Mammary epithelial cell (primary cell): ENCODE measurements at regions of chr2 and their contacts with region 1.

Region 1: GRCh38 chr2:152541712-152542111 is 175.5 kb downstream of the PRPF40A start:
- DNase-seq: no peak
- H3K4me3 ChIP-seq: no peak overlapping the region
- H3K27ac ChIP-seq: peak overlapping the region; percentile 84
- H3K4me1 ChIP-seq: peaks cover 27% of the 10 kb centered on the region
- H3K27me3 ChIP-seq: no peaks in the 10 kb centered on the region
- CTCF ChIP-seq: no peak

Region 2: DNA sequence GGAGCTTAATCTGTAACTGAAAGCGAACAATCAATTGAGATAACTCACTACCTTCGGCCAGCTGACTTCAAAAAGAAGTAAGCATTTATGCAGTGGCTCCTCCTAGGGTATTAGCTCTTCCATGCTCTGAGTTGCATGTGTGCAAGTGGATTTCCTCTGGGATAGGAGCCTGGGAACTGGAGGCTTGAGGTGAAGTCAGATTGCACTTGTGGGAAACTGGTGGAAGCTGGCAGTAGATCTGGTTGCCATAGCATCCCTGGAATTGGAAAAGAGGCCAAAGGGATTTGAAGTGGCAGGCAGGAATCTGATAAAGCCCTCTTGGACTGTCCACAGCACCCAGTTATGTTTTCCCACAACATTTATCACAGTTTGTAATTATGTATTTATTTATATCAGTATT is 257.3 kb before region 1 on chr2:
- CTCF ChIA-PET with region 1: no interaction called
- dilution Hi-C with region 1: no loop called
- in situ Hi-C with region 1: no loop called
- intact Hi-C with region 1: no loop called
- DNase-seq: no peak
- H3K4me3 ChIP-seq: no peak overlapping the region
- H3K27ac ChIP-seq: no peak overlapping the region
- H3K4me1 ChIP-seq: no peaks in the 10 kb centered on the region
- H3K27me3 ChIP-seq: no peaks in the 10 kb centered on the region
- CTCF ChIP-seq: no peak

Region 3: DNA sequence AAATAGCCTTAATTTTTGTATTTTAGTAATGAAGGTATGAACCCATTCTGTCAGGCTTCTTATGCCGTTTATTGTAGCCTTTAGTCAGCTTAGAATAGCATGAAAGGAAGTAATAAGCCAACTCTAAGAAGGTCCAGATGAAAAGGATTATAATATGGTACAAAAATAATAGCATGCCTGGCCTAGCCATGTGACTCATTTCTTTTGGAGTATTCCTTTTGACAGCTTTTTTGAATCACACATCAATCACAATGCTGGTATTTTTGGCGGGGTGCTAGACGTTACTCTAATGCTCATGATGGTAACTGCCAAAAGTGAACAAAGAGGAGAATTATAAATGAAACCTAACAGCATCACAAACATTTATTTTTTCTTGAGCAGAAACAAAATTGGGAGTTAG is 186.8 kb before region 1 on chr2:
- CTCF ChIA-PET with region 1: no interaction called
- dilution Hi-C with region 1: no loop called
- in situ Hi-C with region 1: no loop called
- intact Hi-C with region 1: no loop called
- DNase-seq: no peak
- H3K4me3 ChIP-seq: no peak overlapping the region
- H3K27ac ChIP-seq: no peak overlapping the region
- H3K4me1 ChIP-seq: no peaks in the 10 kb centered on the region
- H3K27me3 ChIP-seq: no peaks in the 10 kb centered on the region
- CTCF ChIP-seq: no peak

Region 4: DNA sequence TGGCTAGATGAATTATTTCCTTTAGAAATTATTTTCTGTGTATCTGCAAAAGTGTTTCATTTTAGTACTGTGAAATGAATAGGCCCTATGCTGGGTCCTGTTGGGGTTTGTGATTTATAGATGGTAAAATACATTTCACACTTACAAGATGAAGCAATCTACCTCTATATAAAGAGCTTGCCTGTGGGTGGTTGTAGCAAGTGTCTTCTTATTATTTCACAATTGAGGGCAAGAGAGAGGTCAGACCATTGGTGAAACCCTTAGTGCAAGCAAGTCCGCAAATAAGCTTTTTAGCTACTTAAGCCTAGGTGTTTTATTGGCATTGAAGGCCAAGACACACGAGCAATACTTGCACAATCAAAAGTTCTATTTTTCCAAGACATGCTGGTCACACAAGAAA is 53.6 kb before region 1 on chr2:
- CTCF ChIA-PET with region 1: no interaction called
- dilution Hi-C with region 1: no loop called
- in situ Hi-C with region 1: no loop called
- intact Hi-C with region 1: loop called (anchors 2 kb)
- DNase-seq: no peak
- H3K4me3 ChIP-seq: no peak overlapping the region
- H3K27ac ChIP-seq: no peak overlapping the region
- H3K4me1 ChIP-seq: no peaks in the 10 kb centered on the region
- H3K27me3 ChIP-seq: no peaks in the 10 kb centered on the region
- CTCF ChIP-seq: no peak

Region 5: GRCh38 chr2:152781175-152781574 is 239.5 kb after region 1 on chr2:
- CTCF ChIA-PET with region 1: no interaction called
- dilution Hi-C with region 1: no loop called
- in situ Hi-C with region 1: no loop called
- intact Hi-C with region 1: no loop called
- DNase-seq: no peak
- H3K4me3 ChIP-seq: no peak overlapping the region
- H3K27ac ChIP-seq: no peak overlapping the region
- H3K4me1 ChIP-seq: no peaks in the 10 kb centered on the region
- H3K27me3 ChIP-seq: no peaks in the 10 kb centered on the region
- CTCF ChIP-seq: no peak